ENCODE measurements at regions of chr10 and their contacts with region 1.

Region 1: GRCh38 chr10:76251841-76252671 is 820.6 kb downstream of the LRMDA start:
- DNase-seq: peak; percentile 99
- H3K4me3 ChIP-seq: no peak overlapping the region
- H3K27ac ChIP-seq: peak overlapping the region; percentile 72 to 77 (median 76)
- H3K4me1 ChIP-seq: peaks cover 0 to 31% (median 17%) of the 10 kb centered on the region in 4 donors
- H3K27me3 ChIP-seq: no peaks in the 10 kb centered on the region
- CTCF ChIP-seq: no peak
- EP300 ChIP-seq: peak; percentile 85 to 97 (median 90)
- POLR2A ChIP-seq: no peak

Region 2: GRCh38 chr10:75508239-75508813 is 743.7 kb before region 1 on chr10:
- intact Hi-C with region 1: loop called (anchors 2 kb)
- DNase-seq: no peak
- H3K4me3 ChIP-seq: no peak overlapping the region
- H3K27ac ChIP-seq: peak overlapping the region; percentile 67 to 80 (median 74)
- H3K4me1 ChIP-seq: peaks cover 0 to 59% (median 45%) of the 10 kb centered on the region in 4 donors
- H3K27me3 ChIP-seq: no peaks in the 10 kb centered on the region
- CTCF ChIP-seq: no peak
- EP300 ChIP-seq: peak in 3 of 4 donors; percentile 84 to 90 (median 89)
- POLR2A ChIP-seq: no peak

Region 3: DNA sequence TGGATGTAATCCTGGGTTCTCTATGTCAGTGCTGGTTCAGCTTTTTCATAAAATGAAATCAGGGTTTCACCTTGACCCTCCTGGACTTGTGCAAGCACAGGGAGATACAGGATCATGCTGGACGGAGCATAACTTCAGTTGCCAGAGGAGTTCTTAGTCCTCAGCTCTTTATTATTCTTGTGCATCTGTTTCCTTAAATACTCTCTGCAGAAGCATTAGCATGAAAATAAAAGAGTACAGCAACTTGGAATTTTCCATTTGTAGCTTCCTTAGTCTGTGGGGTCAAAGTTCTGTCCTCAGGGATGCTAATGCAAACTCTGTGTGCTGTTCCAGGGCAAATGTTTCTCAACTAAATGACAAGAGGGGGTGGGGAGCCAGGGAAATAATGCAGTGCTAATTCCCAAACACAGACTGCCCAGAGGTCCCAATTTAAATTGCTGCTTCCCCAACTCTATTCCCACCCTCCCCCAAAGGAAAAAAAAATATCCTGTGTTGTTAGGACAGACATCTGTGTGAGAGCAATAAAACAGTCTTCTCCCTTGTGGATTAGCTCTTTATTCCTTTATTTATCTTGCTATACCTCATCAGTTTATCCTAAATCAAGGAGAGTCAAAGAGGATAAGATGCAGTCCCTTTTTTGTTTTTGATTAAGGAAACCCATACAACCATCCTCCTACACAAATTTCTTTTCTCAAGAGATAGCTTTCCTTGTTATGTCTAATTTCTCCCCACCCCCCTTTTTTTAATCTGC is 84.3 kb after region 1 on chr10:
- intact Hi-C with region 1: loop called (anchors 5 kb)
- DNase-seq: peak; percentile 73
- H3K4me3 ChIP-seq: no peak overlapping the region
- H3K27ac ChIP-seq: peak overlapping the region; percentile 10 to 83 (median 78)
- H3K4me1 ChIP-seq: peaks cover 0 to 70% (median 68%) of the 10 kb centered on the region in 4 donors
- H3K27me3 ChIP-seq: no peaks in the 10 kb centered on the region
- CTCF ChIP-seq: no peak
- EP300 ChIP-seq: peak in 1 of 4 donors; percentile 21
- POLR2A ChIP-seq: no peak

Region 4: GRCh38 chr10:76456190-76456589 is 204.1 kb after region 1 on chr10:
- intact Hi-C with region 1: loop called (anchors 2 kb)
- DNase-seq: no peak
- H3K4me3 ChIP-seq: no peak overlapping the region
- H3K27ac ChIP-seq: peak overlapping the region in 2 of 4 donors; percentile 20 to 53
- H3K4me1 ChIP-seq: peaks cover 0 to 44% (median 38%) of the 10 kb centered on the region in 4 donors
- H3K27me3 ChIP-seq: no peaks in the 10 kb centered on the region
- CTCF ChIP-seq: no peak
- EP300 ChIP-seq: no peak
- POLR2A ChIP-seq: no peak

Region 5: GRCh38 chr10:76643511-76643911 is 391.5 kb after region 1 on chr10:
- intact Hi-C with region 1: loop called (anchors 2 kb)
- DNase-seq: peak; percentile 94
- H3K4me3 ChIP-seq: no peak overlapping the region
- H3K27ac ChIP-seq: peak overlapping the region in 3 of 4 donors; percentile 80 to 81 (median 81)
- H3K4me1 ChIP-seq: peaks cover 0 to 91% (median 60%) of the 10 kb centered on the region in 4 donors
- H3K27me3 ChIP-seq: no peaks in the 10 kb centered on the region
- CTCF ChIP-seq: no peak
- EP300 ChIP-seq: peak in 1 of 4 donors; percentile 15
- POLR2A ChIP-seq: no peak

Region 6: DNA sequence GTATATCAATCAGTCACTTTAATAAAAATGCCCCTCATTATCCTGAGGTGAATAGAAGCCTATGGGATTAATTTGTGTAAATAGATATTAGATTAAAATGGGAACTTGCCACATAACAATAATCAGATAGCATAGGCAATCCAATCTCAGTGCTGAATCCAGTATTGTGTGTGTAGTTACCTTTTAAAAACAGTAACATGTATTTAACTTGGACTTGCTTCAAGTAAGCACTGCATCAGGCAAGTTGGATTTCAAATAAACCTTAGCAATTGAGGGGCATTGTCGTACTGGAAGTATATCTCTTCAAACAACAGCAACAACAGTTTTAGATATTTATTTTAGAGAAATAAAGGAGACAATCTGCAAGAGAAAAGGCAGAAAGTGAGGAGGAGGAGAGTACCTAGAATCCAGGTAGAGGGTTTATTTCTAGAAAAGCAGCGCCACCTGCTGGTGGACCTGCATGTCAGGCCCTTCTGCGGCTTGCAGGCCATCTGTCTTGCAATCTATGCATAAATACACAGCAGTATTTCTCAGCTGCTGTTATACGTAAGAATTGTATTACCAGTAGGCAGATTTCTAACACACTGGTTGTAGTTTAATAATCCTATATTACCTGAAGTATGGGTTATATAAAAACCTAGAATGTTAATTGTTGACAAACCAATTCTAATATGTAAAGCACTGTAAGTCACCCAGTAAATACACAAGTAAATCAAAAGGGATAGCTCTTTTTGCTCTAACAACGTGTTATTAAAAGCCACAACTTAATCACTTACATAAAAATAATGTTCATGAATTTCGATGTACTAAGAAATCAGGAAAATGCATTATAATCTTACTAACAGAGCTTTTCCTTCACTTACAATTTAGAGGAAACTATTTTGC is 732.7 kb after region 1 on chr10:
- intact Hi-C with region 1: loop called (anchors 5 kb)
- DNase-seq: peak; percentile 87
- H3K4me3 ChIP-seq: no peak overlapping the region
- H3K27ac ChIP-seq: peak overlapping the region in 3 of 4 donors; percentile 26 to 37 (median 32)
- H3K4me1 ChIP-seq: peaks cover 0 to 40% (median 32%) of the 10 kb centered on the region in 4 donors
- H3K27me3 ChIP-seq: no peaks in the 10 kb centered on the region
- CTCF ChIP-seq: peak; percentile 59 to 94 (median 86)
- EP300 ChIP-seq: no peak
- POLR2A ChIP-seq: no peak

Measured in sigmoid colon (tissue), 7 donors.